SK-N-SH (cell line): ENCODE measurements at regions of chr4 and their contacts with region 1.

Region 1: GRCh38 chr4:152369902-152370295 is 166.0 kb downstream of the FBXW7 start:
- DNase-seq: no peak
- H3K4me3 ChIP-seq: no peak overlapping the region
- H3K27ac ChIP-seq: no peak overlapping the region
- H3K4me1 ChIP-seq: no peaks in the 10 kb centered on the region; a peak in 1 of 4 replicates
- H3K27me3 ChIP-seq: no peaks in the 10 kb centered on the region
- CTCF ChIP-seq: peak; percentile 61
- EP300 ChIP-seq: no peak
- RAD21 ChIP-seq: peak; percentile 62

Region 2: GRCh38 chr4:152359208-152360044 is 10.5 kb before region 1 on chr4:
- CTCF ChIA-PET with region 1: interaction called, 10 read pairs
- POLR2A ChIA-PET with region 1: no interaction called
- DNase-seq: no peak
- H3K4me3 ChIP-seq: no peak overlapping the region
- H3K27ac ChIP-seq: no peak overlapping the region
- H3K4me1 ChIP-seq: peaks cover 0 to 12% of the 10 kb centered on the region in 2 experiments; a peak in 2 of 4 replicates
- H3K27me3 ChIP-seq: no peaks in the 10 kb centered on the region
- CTCF ChIP-seq: no peak
- EP300 ChIP-seq: no peak
- RAD21 ChIP-seq: no peak

Region 3: GRCh38 chr4:152385551-152385950 is 15.7 kb after region 1 on chr4:
- CTCF ChIA-PET with region 1: interaction called, 10 read pairs
- POLR2A ChIA-PET with region 1: no interaction called
- DNase-seq: peak; percentile 2
- H3K4me3 ChIP-seq: no peak overlapping the region; a peak in 1 of 4 replicates
- H3K27ac ChIP-seq: no peak overlapping the region
- H3K4me1 ChIP-seq: no peaks in the 10 kb centered on the region; a peak in 1 of 4 replicates
- H3K27me3 ChIP-seq: no peaks in the 10 kb centered on the region
- CTCF ChIP-seq: peak; percentile 75
- EP300 ChIP-seq: no peak
- RAD21 ChIP-seq: peak; percentile 63

Region 4: DNA sequence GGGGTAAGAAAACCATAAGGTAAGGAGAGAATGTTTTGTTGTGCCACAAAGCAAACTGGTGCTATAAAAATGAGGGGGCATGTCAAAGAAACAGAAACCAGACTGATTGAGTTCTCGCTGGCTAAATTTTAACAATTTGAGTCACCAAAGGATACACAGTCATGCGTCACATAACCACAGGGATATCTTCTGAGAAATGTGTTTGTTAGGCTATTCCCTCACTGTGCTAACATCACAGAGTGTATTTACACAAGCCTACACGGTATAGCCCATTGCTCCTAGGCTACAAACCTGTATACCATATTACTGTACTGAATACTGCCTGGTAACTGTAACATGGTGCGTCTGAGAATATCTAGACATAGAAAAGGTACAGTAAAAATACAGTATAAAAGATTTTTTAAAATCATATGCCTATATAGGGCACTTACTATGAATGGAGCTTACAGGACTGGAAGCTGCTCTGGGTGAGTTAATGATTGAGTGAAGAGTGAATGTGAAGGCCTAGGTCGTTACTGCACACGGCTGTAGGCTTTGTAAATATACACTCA is 115.9 kb after region 1 on chr4:
- CTCF ChIA-PET with region 1: no interaction called
- POLR2A ChIA-PET with region 1: no interaction called
- DNase-seq: no peak
- H3K4me3 ChIP-seq: no peak overlapping the region
- H3K27ac ChIP-seq: peak overlapping the region in 1 of 2 experiments; percentile 39; a peak in 3 of 4 replicates
- H3K4me1 ChIP-seq: peaks cover 5 to 10% of the 10 kb centered on the region in 2 experiments; a peak in 2 of 4 replicates
- H3K27me3 ChIP-seq: no peaks in the 10 kb centered on the region
- CTCF ChIP-seq: no peak
- EP300 ChIP-seq: no peak
- RAD21 ChIP-seq: no peak

Region 5: DNA sequence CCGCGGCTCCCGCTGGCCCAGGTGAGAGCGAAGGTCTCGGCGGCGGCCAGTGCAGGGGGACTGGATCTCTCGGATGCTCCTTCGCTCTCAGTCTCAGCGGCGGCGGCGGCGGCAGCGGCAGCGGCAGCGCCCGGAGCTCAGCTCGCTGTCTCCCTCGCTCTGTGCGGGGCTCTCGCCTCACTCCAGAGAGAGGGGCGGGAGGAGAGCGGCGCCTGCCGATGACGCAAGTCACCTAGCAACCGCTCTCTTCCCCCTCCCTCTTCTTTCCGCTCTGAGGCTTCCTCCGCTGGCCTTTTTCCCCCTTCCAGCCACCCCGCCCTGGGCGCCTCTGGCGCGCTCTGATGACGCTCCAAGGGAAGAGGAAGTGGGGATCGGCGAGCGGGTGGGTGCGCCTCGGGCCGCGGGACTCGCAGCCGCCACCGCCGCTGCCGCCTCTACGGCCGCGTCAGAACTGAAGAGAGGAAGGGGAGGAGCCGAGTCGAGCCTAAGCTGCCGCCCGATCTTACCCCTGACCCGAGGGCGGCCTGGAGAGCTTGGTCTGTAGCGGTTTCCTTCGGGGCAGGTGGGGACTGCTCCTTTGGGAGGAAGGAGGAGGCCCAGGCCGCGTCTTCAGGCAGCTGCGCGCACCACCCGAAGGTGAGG is 166.1 kb after region 1 on chr4 and contains the start of gene FBXW7:
- CTCF ChIA-PET with region 1: no interaction called
- POLR2A ChIA-PET with region 1: no interaction called
- DNase-seq: peak; percentile 97
- H3K4me3 ChIP-seq: peak within 1 kb of the TSS; percentile 96 to 99
- H3K27ac ChIP-seq: peak within 1 kb of the TSS; percentile 91
- H3K4me1 ChIP-seq: peaks cover 8 to 18% of the 10 kb centered on the region in 2 experiments; a peak in 3 of 4 replicates
- H3K27me3 ChIP-seq: no peaks in the 10 kb centered on the region
- CTCF ChIP-seq: no peak
- EP300 ChIP-seq: 0 out of 4 replicates have a peak, but pooled peaks of 1 of the 2 experiments have one; percentile 5
- RAD21 ChIP-seq: no peak
- polyA plus RNA-seq, gene FBXW7: 7.7 and 11.4 TPM in 2 replicates